ENCODE measurements at regions of chr3 and their contacts with region 1.

Region 1: GRCh38 chr3:9932843-9933560 is 632 bp upstream of the CRELD1 start:
- DNase-seq: peak; percentile 53 to 96
- H3K4me3 ChIP-seq: peak overlapping the region; percentile 82 to 96
- H3K27ac ChIP-seq: peak overlapping the region; percentile 97 to 99
- H3K4me1 ChIP-seq: peaks cover 11 to 21% of the 10 kb centered on the region in 2 donors
- H3K27me3 ChIP-seq: no peaks in the 10 kb centered on the region
- CTCF ChIP-seq: peak; percentile 84 to 93 (median 89)

Region 2: GRCh38 chr3:9552252-9552999 is 380.6 kb before region 1 on chr3:
- intact Hi-C with region 1: no loop called
- DNase-seq: no peak
- H3K4me3 ChIP-seq: no peak overlapping the region
- H3K27ac ChIP-seq: no peak overlapping the region
- H3K4me1 ChIP-seq: no peaks in the 10 kb centered on the region
- H3K27me3 ChIP-seq: peaks cover 17% of the 10 kb centered on the region
- CTCF ChIP-seq: no peak

Region 3: DNA sequence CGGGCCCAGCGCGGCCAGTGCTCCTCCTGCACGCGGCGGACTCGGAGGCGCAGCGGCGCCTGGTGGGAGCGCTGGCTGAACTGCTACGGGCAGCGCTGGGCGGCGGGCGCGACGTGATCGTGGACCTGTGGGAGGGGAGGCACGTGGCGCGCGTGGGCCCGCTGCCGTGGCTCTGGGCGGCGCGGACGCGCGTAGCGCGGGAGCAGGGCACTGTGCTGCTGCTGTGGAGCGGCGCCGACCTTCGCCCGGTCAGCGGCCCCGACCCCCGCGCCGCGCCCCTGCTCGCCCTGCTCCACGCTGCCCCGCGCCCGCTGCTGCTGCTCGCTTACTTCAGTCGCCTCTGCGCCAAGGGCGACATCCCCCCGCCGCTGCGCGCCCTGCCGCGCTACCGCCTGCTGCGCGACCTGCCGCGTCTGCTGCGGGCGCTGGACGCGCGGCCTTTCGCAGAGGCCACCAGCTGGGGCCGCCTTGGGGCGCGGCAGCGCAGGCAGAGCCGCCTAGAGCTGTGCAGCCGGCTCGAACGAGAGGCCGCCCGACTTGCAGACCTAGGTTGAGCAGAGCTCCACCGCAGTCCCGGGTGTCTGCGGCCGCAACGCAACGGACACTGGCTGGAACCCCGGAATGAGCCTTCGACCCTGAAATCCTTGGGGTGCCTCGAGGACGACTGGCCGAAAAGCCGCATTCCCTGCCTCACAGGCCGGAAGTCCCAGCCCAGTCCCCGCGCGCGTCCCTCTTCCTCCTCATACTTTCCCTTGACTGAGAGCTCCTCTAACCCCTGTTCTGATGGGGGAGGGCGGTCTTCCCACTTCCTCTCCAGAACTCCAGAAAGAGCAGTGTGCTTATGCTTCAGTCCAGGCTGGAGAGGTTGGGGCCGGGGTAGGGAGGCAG is 17.5 kb before region 1 on chr3:
- intact Hi-C with region 1: loop called (anchors 1 kb)
- DNase-seq: peak in 1 of 2 donors; percentile 85
- H3K4me3 ChIP-seq: peak overlapping the region; percentile 62 to 89
- H3K27ac ChIP-seq: peak overlapping the region; percentile 79 to 86
- H3K4me1 ChIP-seq: peaks cover 22 to 32% of the 10 kb centered on the region in 2 donors
- H3K27me3 ChIP-seq: no peaks in the 10 kb centered on the region
- CTCF ChIP-seq: peak in 2 of 3 experiments; percentile 32 to 56